Activated CD4-positive, alpha-beta T cell treated with anti-CD3 and anti-CD28 coated beads, Interleukin-2, amount 10 ng/mL, durations not matched to agents 24 days and 14 days (primary cell): ENCODE measurements at regions of chr1 and their contacts with region 1.

Region 1: GRCh38 chr1:228082135-228082891 is at the start of gene ARF1:
- DNase-seq: peak; percentile 98
- H3K4me3 Mint-ChIP-seq: peak within 1 kb of the TSS; percentile 97
- H3K27ac Mint-ChIP-seq: peak within 1 kb of the TSS; percentile 93
- H3K4me1 Mint-ChIP-seq: peaks cover 39% of the 10 kb centered on the region
- H3K27me3 Mint-ChIP-seq: no peaks in the 10 kb centered on the region
- total RNA-seq, gene ARF1: 388 and 395 TPM in 2 replicates

Region 2: DNA sequence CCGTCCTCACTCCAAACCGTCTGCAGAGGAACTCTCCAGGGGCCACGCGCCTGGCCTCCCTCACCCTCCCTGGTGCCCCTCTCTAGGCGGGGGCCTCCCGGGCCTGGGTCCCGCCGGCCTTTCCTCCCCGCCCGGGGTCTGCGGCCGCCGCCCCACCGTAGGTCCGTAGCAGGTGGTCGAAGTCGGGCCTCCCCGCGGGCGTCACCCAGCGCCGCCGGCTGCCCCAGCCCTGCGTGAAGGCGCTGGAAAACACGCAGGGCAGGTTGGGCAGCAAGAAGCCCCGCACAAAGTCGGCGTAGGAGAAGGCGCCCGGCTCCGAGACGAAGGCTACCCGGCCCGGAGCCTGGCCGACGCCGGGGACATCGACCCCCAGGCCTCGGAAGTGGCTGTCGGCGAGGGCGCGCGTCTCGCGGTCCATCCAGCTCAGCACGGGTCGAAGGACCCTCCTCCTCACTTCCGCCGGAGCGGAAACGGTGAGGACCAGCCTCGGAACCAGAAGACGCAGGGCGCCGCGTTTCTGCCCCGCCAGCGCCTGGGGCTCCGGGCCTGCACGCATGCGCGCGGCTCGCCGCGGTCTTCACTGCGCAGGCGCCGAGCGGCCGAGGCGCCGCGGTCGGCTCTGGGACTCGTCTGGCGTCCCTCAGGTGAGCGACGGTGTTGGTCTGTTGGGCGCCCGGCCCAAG is 347.3 kb before region 1 on chr1 and contains the starts of genes JMJD4 and SNAP47:
- intact Hi-C with region 1: loop called (anchors 1 kb)
- DNase-seq: peak; percentile 99
- H3K4me3 Mint-ChIP-seq: peak within 1 kb of the TSS; percentile 98
- H3K27ac Mint-ChIP-seq: peak within 1 kb of the TSS; percentile 93
- H3K4me1 Mint-ChIP-seq: peaks cover 26% of the 10 kb centered on the region
- H3K27me3 Mint-ChIP-seq: peaks cover 2% of the 10 kb centered on the region
- total RNA-seq, gene JMJD4: 34.8 and 35.1 TPM in 2 replicates
- total RNA-seq, gene SNAP47: 28.6 and 30.9 TPM in 2 replicates

Region 3: GRCh38 chr1:227787513-227788270 is 294.6 kb before region 1 on chr1:
- intact Hi-C with region 1: loop called (anchors 1 kb)
- DNase-seq: peak; percentile 96
- H3K4me3 Mint-ChIP-seq: peak overlapping the region; percentile 83
- H3K27ac Mint-ChIP-seq: peak overlapping the region; percentile 21
- H3K4me1 Mint-ChIP-seq: peaks cover 12% of the 10 kb centered on the region
- H3K27me3 Mint-ChIP-seq: peaks cover 9% of the 10 kb centered on the region

Region 4: GRCh38 chr1:228102791-228103620 is 20.7 kb after region 1 on chr1 and contains the start of gene C1orf35:
- intact Hi-C with region 1: loop called (anchors 1 kb)
- DNase-seq: peak; percentile 99
- H3K4me3 Mint-ChIP-seq: peak within 1 kb of the TSS; percentile 93
- H3K27ac Mint-ChIP-seq: peak within 1 kb of the TSS; percentile 97
- H3K4me1 Mint-ChIP-seq: peaks cover 24% of the 10 kb centered on the region
- H3K27me3 Mint-ChIP-seq: peaks cover 2% of the 10 kb centered on the region
- total RNA-seq, gene C1orf35: 27.5 and 33.0 TPM in 2 replicates

Region 5: DNA sequence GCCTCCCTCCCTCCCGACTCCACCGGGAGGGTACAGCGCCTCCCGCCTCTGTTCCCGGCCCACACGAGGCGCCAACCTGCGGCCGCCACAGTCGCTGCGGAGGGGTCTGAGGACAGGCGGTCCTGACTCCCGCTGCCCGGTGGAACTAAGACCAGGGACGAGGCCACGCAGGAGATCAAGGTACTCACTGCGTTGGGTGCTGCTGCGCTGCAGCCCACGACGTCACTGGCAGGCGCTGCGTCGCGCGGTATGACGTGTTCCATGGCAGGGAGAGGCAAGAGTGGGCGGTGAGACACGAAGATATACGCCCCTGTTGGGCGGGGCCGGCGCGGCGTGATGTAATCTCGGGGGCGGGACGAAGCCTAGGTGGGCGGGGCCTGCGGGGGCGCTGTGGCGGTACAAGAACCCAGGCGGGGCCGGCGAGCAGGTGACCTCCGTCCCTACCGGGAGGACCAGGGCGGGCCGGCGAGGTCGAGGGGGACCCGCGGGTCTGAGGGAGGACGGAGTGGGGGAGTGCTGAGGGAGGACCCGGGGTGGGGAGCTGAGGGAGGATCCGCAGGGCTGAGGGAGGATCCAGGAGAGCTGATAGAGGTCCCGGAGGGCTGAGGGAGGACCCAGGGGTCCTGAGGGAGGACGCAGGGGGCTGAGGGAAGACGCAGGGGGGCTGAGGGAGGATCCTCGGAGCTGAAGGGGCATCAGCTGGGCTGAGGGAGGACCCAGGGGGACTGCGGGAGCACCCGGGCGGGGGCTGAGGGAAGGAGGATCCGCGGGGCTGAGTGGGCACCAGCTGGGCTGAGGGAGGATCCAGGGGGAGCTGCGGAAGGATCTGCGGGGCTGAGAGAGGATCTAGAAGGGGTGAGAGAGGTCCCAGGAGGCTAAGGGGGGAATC is 27.0 kb after region 1 on chr1 and contains the start of gene MRPL55:
- intact Hi-C with region 1: loop called (anchors 1 kb)
- DNase-seq: peak; percentile 100
- H3K4me3 Mint-ChIP-seq: peak within 1 kb of the TSS; percentile 95
- H3K27ac Mint-ChIP-seq: peak within 1 kb of the TSS; percentile 88
- H3K4me1 Mint-ChIP-seq: peaks cover 23% of the 10 kb centered on the region
- H3K27me3 Mint-ChIP-seq: peaks cover 2% of the 10 kb centered on the region
- total RNA-seq, gene MRPL55: 55.2 and 62.2 TPM in 2 replicates

Region 6: GRCh38 chr1:228457396-228458176 is 375.3 kb after region 1 on chr1:
- intact Hi-C with region 1: loop called (anchors 5 kb)
- DNase-seq: peak; percentile 97
- H3K4me3 Mint-ChIP-seq: peak overlapping the region; percentile 97
- H3K27ac Mint-ChIP-seq: peak overlapping the region; percentile 99
- H3K4me1 Mint-ChIP-seq: peaks cover 47% of the 10 kb centered on the region
- H3K27me3 Mint-ChIP-seq: peaks cover 3% of the 10 kb centered on the region